ENCODE measurements at regions of chr2 and their contacts with region 1.

Region 1: DNA sequence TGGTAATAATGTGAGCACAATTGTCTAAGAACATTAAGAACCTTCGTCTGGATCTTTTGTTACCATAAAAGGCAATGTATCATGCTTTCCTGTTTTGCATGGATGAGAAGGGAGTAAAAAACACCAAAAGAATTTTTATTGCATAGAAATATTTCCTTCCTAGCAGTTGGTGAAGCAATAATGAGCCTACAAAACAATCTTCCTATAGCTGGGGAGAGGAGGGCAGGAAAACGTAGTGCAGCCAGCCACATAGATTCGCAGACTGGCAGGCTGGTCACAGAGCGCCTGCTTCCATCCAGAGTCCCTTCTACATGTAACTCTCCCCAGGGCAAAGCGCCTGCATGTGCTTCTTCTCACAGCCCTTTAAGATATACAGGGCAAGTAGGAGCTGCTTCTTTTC is 190.4 kb downstream of the BABAM2 start:
- DNase-seq: no peak
- H3K4me3 ChIP-seq: no peak overlapping the region
- H3K27ac ChIP-seq: no peak overlapping the region
- H3K4me1 ChIP-seq: no peaks in the 10 kb centered on the region
- H3K27me3 ChIP-seq: no peaks in the 10 kb centered on the region
- CTCF ChIP-seq: no peak

Region 2: GRCh38 chr2:28004086-28004485 is 76.8 kb before region 1 on chr2:
- CTCF ChIA-PET with region 1: no interaction called
- POLR2A ChIA-PET with region 1: interaction called, 13 read pairs
- intact Hi-C with region 1: no loop called
- DNase-seq: peak in 1 of 2 experiments; percentile 58
- H3K4me3 ChIP-seq: no peak overlapping the region
- H3K27ac ChIP-seq: peak overlapping the region; percentile 44
- H3K4me1 ChIP-seq: peaks cover 15% of the 10 kb centered on the region
- H3K27me3 ChIP-seq: no peaks in the 10 kb centered on the region
- CTCF ChIP-seq: no peak

Region 3: GRCh38 chr2:28025123-28025522 is 55.8 kb before region 1 on chr2:
- CTCF ChIA-PET with region 1: no interaction called
- POLR2A ChIA-PET with region 1: no interaction called
- intact Hi-C with region 1: no loop called
- DNase-seq: no peak
- H3K4me3 ChIP-seq: no peak overlapping the region
- H3K27ac ChIP-seq: no peak overlapping the region
- H3K4me1 ChIP-seq: no peaks in the 10 kb centered on the region
- H3K27me3 ChIP-seq: no peaks in the 10 kb centered on the region
- CTCF ChIP-seq: no peak

Region 4: DNA sequence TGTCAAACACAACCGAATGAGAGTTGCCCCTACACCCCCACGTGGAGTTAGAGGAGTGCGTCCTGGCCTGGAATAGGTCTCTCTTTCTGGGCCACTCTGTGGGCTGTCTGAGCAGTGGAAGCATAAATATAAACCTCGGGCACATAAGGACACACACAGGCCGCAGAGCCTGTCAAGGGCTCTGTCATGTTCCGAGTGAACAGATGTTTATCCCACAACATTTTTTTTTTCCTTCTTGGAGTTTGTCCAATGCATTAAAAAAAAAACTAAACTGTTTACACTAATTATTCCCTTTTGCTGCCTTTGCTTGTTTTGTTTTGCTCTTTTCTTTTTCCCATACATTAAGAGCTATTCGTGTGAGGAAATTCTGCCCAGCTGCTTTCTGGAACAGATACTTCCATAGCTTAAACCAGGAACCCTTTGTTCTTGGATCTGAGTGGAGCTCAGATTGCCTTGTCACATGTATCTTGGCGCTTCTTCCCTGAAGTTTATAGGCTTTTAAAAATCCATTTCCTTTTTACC is 83.4 kb after region 1 on chr2:
- CTCF ChIA-PET with region 1: no interaction called
- POLR2A ChIA-PET with region 1: no interaction called
- intact Hi-C with region 1: no loop called
- DNase-seq: no peak
- H3K4me3 ChIP-seq: no peak overlapping the region
- H3K27ac ChIP-seq: no peak overlapping the region
- H3K4me1 ChIP-seq: peaks cover 6% of the 10 kb centered on the region; the same call in 1 of the 2 replicates
- H3K27me3 ChIP-seq: no peaks in the 10 kb centered on the region
- CTCF ChIP-seq: no peak

Region 5: GRCh38 chr2:28325567-28326468 is 244.9 kb after region 1 on chr2:
- CTCF ChIA-PET with region 1: no interaction called
- POLR2A ChIA-PET with region 1: no interaction called
- intact Hi-C with region 1: no loop called
- DNase-seq: peak; percentile 86 to 95
- H3K4me3 ChIP-seq: no peak overlapping the region
- H3K27ac ChIP-seq: peak overlapping the region; percentile 78
- H3K4me1 ChIP-seq: peaks cover 41% of the 10 kb centered on the region
- H3K27me3 ChIP-seq: no peaks in the 10 kb centered on the region
- CTCF ChIP-seq: no peak; the same call in 1 of the 2 replicates